SK-N-SH (cell line): ENCODE measurements at regions of chr14 and their contacts with region 1.

Region 1: GRCh38 chr14:22556990-22557623 is 31.9 kb downstream of the DAD1 start:
- DNase-seq: peak; percentile 94
- H3K4me3 ChIP-seq: peak overlapping the region; percentile 35 to 67
- H3K27ac ChIP-seq: no peak overlapping the region; a peak in 1 of 4 replicates
- H3K4me1 ChIP-seq: peaks cover 3 to 10% of the 10 kb centered on the region in 2 experiments; a peak in 3 of 4 replicates
- H3K27me3 ChIP-seq: no peaks in the 10 kb centered on the region
- CTCF ChIP-seq: peak; percentile 100
- EP300 ChIP-seq: no peak
- RAD21 ChIP-seq: peak; percentile 80

Region 2: GRCh38 chr14:22531451-22532344 is 25.4 kb before region 1 on chr14:
- CTCF ChIA-PET with region 1: interaction called, 15 read pairs
- POLR2A ChIA-PET with region 1: no interaction called
- DNase-seq: no peak
- H3K4me3 ChIP-seq: no peak overlapping the region
- H3K27ac ChIP-seq: peak overlapping the region in 1 of 2 experiments; percentile 32; a peak in 1 of 4 replicates
- H3K4me1 ChIP-seq: peaks cover 0 to 18% of the 10 kb centered on the region in 2 experiments; a peak in 2 of 4 replicates
- H3K27me3 ChIP-seq: no peaks in the 10 kb centered on the region; the same call in 1 of the 2 replicates
- CTCF ChIP-seq: no peak
- EP300 ChIP-seq: no peak
- RAD21 ChIP-seq: no peak

Region 3: DNA sequence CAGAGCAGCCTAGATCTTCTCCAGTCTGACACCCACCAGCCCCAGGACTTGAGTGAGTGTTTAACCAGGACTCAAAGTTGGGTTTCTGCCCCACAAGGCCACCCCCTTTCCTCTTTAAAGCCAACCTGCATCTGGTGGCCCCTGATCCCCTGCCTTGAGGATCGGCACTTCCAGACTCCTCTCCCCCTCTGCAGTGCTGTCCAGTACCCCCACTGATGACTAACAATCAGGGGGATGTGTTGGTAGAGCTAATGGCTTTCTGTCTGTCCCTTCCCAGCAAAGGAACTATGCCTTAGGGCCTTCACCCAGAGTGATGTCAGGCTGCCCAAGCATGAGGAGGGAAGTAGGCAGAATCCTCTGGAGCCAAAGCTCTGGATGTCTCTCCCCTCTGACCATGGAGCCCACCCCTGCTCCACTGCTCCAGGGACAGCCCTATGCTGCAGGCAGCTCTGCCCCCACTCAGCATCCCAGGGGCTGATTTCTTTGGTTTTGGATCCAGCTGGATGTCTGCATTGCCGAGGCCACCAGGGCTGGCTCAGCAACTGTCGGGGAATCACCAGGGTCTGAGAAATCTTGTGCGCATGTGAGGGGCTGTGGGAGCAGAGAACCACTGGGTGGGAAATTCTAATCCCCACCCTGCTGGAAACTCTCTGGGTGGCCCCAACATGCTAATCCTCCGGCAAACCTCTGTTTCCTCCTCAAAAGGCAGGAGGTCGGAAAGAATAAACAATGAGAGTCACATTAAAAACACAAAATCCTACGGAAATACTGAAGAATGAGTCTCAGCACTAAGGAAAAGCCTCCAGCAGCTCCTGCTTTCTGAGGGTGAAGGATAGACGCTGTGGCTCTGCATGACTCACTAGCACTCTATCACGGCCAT is 11.0 kb before region 1 on chr14:
- CTCF ChIA-PET with region 1: interaction called, 44 read pairs
- POLR2A ChIA-PET with region 1: no interaction called
- DNase-seq: no peak
- H3K4me3 ChIP-seq: no peak overlapping the region
- H3K27ac ChIP-seq: peak overlapping the region in 1 of 2 experiments; percentile 82; a peak in 2 of 4 replicates
- H3K4me1 ChIP-seq: peaks cover 0 to 55% of the 10 kb centered on the region in 2 experiments; a peak in 3 of 4 replicates
- H3K27me3 ChIP-seq: no peaks in the 10 kb centered on the region
- CTCF ChIP-seq: no peak
- EP300 ChIP-seq: no peak
- RAD21 ChIP-seq: no peak

Region 4: GRCh38 chr14:22598099-22598899 is 41.2 kb after region 1 on chr14 and contains the start of gene ABHD4:
- CTCF ChIA-PET with region 1: interaction called, 15 read pairs
- POLR2A ChIA-PET with region 1: no interaction called
- DNase-seq: peak; percentile 89
- H3K4me3 ChIP-seq: peak within 1 kb of the TSS; percentile 89 to 93
- H3K27ac ChIP-seq: peak within 1 kb of the TSS; percentile 64 to 80
- H3K4me1 ChIP-seq: peaks cover 6 to 8% of the 10 kb centered on the region in 2 experiments; a peak in 3 of 4 replicates
- H3K27me3 ChIP-seq: no peaks in the 10 kb centered on the region; the same call in 1 of the 2 replicates
- CTCF ChIP-seq: no peak
- EP300 ChIP-seq: no peak
- RAD21 ChIP-seq: no peak
- polyA plus RNA-seq, gene ABHD4: 15.0 and 18.8 TPM in 2 replicates

Region 5: GRCh38 chr14:22658946-22659345 is 101.8 kb after region 1 on chr14:
- CTCF ChIA-PET with region 1: interaction called, 42 read pairs
- POLR2A ChIA-PET with region 1: no interaction called
- DNase-seq: no peak
- H3K4me3 ChIP-seq: no peak overlapping the region
- H3K27ac ChIP-seq: no peak overlapping the region
- H3K4me1 ChIP-seq: no peaks in the 10 kb centered on the region
- H3K27me3 ChIP-seq: no peaks in the 10 kb centered on the region; the same call in 1 of the 2 replicates
- CTCF ChIP-seq: no peak
- EP300 ChIP-seq: no peak
- RAD21 ChIP-seq: no peak

Region 6: DNA sequence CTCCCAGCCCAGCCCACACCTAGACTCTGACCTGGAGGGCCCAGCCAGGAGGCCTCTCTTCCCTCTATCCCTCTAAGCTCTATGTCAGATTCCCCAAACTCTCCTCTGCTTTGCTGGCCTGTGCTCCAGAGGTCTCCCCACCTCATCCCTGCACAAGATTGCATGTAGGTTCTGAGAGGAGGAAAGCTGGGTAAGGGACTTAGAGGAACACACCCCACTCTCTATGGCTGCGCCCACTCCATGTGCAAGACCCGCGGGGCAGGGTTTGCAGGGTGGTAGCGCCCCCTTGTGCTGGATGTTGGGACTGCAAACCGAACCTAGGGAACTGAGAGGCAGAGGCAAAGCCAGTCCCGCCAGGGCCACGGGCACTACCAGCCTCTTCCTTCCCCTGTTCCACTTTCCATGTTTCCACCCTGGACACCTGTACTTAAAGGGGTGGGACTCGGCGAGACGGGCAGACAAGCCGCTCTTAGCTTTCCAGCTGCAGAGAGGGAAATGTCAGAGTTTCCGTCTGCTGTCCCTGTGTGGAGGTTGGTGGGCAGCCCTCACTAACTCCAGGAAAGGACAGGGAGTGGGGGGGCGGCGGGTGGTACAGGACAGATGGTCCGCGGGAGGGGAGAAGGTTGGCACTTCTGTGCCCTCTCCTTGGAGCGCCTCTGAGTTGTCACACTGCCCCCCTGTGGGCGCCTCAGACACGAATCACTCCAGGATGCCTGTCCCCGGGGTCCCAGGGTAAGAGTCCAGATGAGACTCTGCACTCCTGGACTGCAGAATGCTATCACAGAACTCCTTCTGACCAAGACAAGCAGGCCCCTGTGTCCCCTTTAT is 296.0 kb after region 1 on chr14:
- CTCF ChIA-PET with region 1: interaction called, 13 read pairs
- POLR2A ChIA-PET with region 1: no interaction called
- DNase-seq: peak; percentile 85
- H3K4me3 ChIP-seq: peak overlapping the region; percentile 52 to 63
- H3K27ac ChIP-seq: no peak overlapping the region; a peak in 1 of 4 replicates
- H3K4me1 ChIP-seq: peaks cover 25 to 30% of the 10 kb centered on the region in 2 experiments
- H3K27me3 ChIP-seq: no peaks in the 10 kb centered on the region
- CTCF ChIP-seq: peak; percentile 92
- EP300 ChIP-seq: no peak
- RAD21 ChIP-seq: peak; percentile 97

Region 7: GRCh38 chr14:22900081-22900799 is 343.1 kb after region 1 on chr14:
- CTCF ChIA-PET with region 1: interaction called, 15 read pairs
- POLR2A ChIA-PET with region 1: no interaction called
- DNase-seq: peak; percentile 72
- H3K4me3 ChIP-seq: no peak overlapping the region
- H3K27ac ChIP-seq: 0 out of 4 replicates have a peak overlapping the region, but pooled peaks of 1 of the 2 experiments have one; percentile 17
- H3K4me1 ChIP-seq: peaks cover 0 to 14% of the 10 kb centered on the region in 2 experiments; a peak in 3 of 4 replicates
- H3K27me3 ChIP-seq: no peaks in the 10 kb centered on the region
- CTCF ChIP-seq: peak; percentile 62
- EP300 ChIP-seq: no peak
- RAD21 ChIP-seq: peak; percentile 69